Activated naive CD4-positive, alpha-beta T cell treated with anti-CD3 and anti-CD28 coated beads, Interleukin-2, amount 10 ng/mL, durations not matched to agents 7 days and 5 days (primary cell): ENCODE measurements at regions of chr11 and their contacts with region 1.

Region 1: DNA sequence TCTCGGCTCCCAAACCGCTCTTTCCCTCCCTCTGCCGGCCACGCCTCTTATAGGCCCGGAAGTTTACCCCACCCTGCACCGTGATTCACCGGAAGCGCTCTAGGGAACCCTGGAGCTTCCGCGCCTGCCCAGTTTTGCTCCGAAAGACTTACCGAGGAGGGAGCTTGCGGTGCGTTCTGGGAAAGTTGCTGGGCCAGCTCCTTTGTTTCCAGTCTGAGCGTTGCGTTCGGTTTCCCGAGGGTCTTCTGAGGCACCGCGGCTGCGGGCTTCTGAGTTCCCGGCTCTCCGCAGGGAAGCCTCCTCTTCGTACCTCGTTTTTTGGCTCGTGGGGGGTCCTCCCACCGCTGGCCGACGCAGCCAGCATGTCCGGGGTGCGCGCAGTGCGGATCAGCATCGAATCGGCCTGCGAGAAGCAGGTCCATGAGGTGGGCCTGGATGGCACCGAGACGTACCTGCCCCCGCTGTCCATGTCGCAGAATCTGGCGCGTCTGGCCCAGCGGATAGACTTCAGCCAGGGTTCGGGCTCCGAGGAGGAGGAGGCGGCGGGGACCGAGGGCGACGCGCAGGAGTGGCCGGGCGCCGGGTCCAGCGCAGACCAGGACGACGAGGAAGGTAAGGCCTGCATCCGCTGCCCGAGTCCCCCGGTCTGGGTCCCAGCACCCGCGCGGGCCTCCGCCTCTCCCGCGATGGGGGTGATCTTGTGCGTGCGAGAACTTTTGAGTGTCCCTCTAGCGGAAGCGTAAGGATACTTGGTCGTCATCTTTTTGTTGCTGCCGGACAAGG is at the start of gene MED17:
- DNase-seq: peak; percentile 94
- H3K4me3 Mint-ChIP-seq: peak within 1 kb of the TSS; percentile 95
- H3K27ac Mint-ChIP-seq: peak within 1 kb of the TSS; percentile 96
- H3K4me1 Mint-ChIP-seq: peaks cover 52% of the 10 kb centered on the region
- H3K27me3 Mint-ChIP-seq: no peaks in the 10 kb centered on the region

Region 2: GRCh38 chr11:93585758-93586157 is 198.6 kb before region 1 on chr11:
- CTCF ChIA-PET with region 1: no interaction called
- DNase-seq: no peak
- H3K4me3 Mint-ChIP-seq: no peak overlapping the region
- H3K27ac Mint-ChIP-seq: no peak overlapping the region
- H3K4me1 Mint-ChIP-seq: peaks cover 5% of the 10 kb centered on the region
- H3K27me3 Mint-ChIP-seq: peaks cover 17% of the 10 kb centered on the region

Region 3: DNA sequence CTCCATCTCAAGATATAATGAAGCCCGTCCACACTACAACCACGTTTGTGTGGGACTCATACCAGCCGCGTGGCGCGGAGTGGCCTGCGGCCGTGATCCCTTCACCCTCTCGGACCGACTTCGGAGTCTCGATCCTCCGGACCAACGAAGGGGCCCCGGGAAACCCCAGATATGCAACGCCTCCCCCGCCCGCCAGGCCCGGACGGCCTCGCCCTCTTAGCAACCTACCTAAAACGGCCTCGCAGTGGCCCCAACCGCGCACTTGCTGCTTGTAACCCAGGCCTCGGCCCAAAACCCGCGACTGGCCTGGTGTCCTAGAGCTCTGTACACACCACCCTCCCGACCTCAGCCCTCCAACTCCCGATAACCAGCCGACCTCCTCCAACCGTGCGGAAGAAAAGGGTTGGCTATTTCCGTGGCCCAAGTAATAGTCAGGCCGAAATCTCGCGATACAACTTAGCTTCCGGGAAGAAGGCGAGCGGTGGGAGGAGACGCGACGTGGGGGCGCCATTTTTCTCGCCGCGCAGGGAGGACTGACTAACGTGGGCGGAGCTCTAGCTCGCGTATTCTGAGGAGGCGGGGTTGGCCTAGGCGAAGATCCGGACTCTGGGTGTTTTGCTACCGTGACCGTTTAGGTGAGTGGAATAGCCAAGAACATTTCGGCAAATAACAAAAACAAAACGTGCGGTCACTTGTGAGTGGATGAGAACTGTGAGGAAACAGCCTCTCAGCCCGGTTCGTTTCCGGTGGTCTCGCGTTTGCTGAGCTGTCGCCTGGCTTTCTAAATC is 43.1 kb before region 1 on chr11 and contains the starts of genes C11orf54 and TAF1D:
- CTCF ChIA-PET with region 1: interaction called, 21 read pairs
- DNase-seq: peak; percentile 98
- H3K4me3 Mint-ChIP-seq: peak within 1 kb of the TSS; percentile 99
- H3K27ac Mint-ChIP-seq: peak within 1 kb of the TSS; percentile 99
- H3K4me1 Mint-ChIP-seq: peaks cover 62% of the 10 kb centered on the region
- H3K27me3 Mint-ChIP-seq: peaks cover 4% of the 10 kb centered on the region

Region 4: GRCh38 chr11:93767018-93767417 is 17.3 kb before region 1 on chr11:
- CTCF ChIA-PET with region 1: no interaction called
- DNase-seq: no peak
- H3K4me3 Mint-ChIP-seq: no peak overlapping the region
- H3K27ac Mint-ChIP-seq: no peak overlapping the region
- H3K4me1 Mint-ChIP-seq: no peaks in the 10 kb centered on the region
- H3K27me3 Mint-ChIP-seq: no peaks in the 10 kb centered on the region

Region 5: GRCh38 chr11:93842461-93842860 is 58.1 kb after region 1 on chr11:
- CTCF ChIA-PET with region 1: no interaction called
- DNase-seq: no peak
- H3K4me3 Mint-ChIP-seq: no peak overlapping the region
- H3K27ac Mint-ChIP-seq: no peak overlapping the region
- H3K4me1 Mint-ChIP-seq: no peaks in the 10 kb centered on the region
- H3K27me3 Mint-ChIP-seq: peaks cover 10% of the 10 kb centered on the region